ENCODE measurements at regions of chr14 and their contacts with region 1.

Region 1: DNA sequence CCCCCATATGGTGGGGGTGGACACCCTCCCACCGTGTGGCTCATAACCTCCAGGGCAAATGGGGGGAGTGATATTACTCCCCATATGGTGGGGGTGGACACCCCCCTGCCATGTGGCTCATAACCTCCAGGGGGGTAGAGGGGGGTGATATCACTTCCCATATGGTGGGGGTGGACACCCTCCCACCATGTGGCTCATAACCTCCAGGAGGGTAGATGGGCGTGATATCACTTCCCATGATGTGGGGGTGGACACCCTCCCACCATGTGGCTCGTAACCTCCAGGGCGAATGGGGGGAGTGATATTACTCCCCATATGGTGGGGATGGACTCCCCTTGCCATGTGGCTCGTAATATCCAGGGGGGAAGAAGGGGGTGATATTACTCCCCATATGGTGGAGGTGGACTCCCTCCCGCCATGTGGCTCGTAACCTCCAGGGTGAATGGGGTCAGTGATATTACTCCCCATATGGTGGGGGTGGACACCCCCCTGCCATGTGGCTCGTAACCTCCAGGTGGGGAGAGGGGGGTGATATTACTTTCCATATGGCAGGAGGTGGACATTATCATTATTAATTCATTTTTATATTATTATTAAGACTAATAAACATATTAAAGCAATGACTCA is 51.2 kb upstream of the OXA1L start:
- DNase-seq: no peak
- H3K4me3 ChIP-seq: no peak overlapping the region
- H3K27ac ChIP-seq: no peak overlapping the region
- H3K4me1 ChIP-seq: no peaks in the 10 kb centered on the region
- H3K27me3 ChIP-seq: no peaks in the 10 kb centered on the region
- CTCF ChIP-seq: no peak

Region 2: DNA sequence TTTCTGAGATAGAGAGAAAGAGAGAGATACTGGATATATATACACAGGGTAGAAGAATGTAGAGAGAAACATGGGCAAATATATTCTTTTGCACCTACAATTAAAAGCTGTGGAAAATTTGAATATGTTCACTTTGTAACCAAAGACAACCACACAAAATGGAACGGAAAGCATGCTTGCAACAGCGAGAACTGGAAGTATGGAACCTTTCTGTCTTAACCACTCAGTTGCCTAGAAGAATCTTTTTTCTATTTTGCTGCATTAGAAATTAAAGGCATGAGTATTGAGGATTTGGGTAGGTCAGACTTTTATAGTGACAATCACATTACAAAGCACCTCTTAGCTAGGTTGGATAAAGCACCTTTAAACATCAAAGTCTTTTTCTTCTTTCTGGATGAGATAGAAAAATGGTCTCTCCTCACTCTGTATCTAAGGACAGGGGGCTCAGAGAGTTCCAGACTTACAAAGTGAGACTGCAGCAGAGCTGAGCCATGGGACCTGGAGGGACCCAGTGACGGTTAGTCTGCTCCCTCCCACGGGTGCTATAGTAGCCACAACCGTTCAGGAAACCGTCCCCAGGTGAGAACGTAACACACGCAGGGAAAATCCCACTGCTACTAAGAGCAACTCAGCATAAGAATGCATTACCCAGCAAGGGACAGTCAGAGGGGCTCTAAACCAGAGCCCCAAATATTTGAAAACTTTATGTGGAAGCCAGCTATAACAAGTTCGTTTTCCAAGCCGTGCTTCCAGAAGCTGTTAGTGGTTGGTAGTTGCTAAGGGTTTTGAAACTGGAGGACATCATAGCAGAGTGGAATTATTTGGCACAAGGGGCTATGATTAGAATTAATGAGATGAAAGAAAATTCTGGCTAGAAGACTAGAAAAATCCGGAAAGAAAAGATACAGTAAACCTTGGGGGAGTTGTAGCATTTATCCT is 223.3 kb before region 1 on chr14:
- CTCF ChIA-PET with region 1: no interaction called
- POLR2A ChIA-PET with region 1: no interaction called
- intact Hi-C with region 1: no loop called
- DNase-seq: no peak
- H3K4me3 ChIP-seq: no peak overlapping the region
- H3K27ac ChIP-seq: no peak overlapping the region
- H3K4me1 ChIP-seq: no peaks in the 10 kb centered on the region
- H3K27me3 ChIP-seq: no peaks in the 10 kb centered on the region
- CTCF ChIP-seq: no peak

Region 3: GRCh38 chr14:22658946-22659345 is 56.4 kb before region 1 on chr14:
- CTCF ChIA-PET with region 1: interaction called, 3 read pairs
- POLR2A ChIA-PET with region 1: interaction called, 25 read pairs
- intact Hi-C with region 1: loop called (anchors 10 kb)
- DNase-seq: no peak
- H3K4me3 ChIP-seq: no peak overlapping the region
- H3K27ac ChIP-seq: no peak overlapping the region
- H3K4me1 ChIP-seq: no peaks in the 10 kb centered on the region
- H3K27me3 ChIP-seq: no peaks in the 10 kb centered on the region
- CTCF ChIP-seq: no peak

Region 4: DNA sequence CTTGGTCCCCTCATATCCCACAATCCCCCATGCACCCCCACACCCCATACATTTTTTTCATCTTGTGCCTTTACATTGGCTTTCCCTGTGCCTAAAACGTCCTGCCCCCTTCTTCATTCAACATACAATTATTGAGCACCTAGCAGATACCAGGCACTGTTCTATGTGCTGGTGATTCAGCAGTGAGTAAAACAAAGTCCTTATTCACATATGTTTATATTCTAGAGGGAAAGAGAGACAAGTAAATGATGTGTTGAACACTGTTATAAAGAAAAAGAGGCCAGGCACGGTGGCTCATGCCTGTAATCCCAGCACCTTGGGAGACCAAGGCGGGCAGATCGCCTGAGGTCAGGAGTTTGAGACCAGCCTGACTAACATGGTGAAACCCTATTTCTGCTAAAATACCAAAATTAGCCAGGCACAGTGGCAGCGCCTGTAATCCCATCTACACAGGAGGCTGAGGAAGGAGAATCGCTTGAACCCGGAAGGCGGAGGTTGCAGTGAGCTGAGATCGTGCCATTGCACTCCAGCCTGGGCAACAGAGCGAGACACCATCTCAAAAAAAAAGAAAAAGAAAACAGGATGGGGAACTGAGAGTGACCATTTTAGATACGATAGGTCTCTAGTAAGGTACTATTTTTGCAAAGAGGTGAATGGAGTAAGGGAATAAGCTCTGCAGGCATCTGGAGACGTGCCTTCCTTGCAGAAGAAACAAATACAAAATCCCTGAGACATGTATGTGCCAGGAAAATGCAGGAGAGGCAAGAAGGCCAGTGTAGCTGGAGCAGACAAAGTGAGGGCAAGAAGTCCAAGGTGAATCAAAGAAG is 87.8 kb after region 1 on chr14:
- CTCF ChIA-PET with region 1: no interaction called
- POLR2A ChIA-PET with region 1: interaction called, 16 read pairs
- intact Hi-C with region 1: no loop called
- DNase-seq: no peak
- H3K4me3 ChIP-seq: no peak overlapping the region
- H3K27ac ChIP-seq: no peak overlapping the region
- H3K4me1 ChIP-seq: peaks cover 12% of the 10 kb centered on the region
- H3K27me3 ChIP-seq: no peaks in the 10 kb centered on the region
- CTCF ChIP-seq: no peak

Region 5: GRCh38 chr14:22829661-22830442 is 114.6 kb after region 1 on chr14 and contains the start of gene MRPL52:
- CTCF ChIA-PET with region 1: no interaction called
- POLR2A ChIA-PET with region 1: no interaction called
- intact Hi-C with region 1: no loop called
- DNase-seq: peak; percentile 60 to 68
- H3K4me3 ChIP-seq: peak within 1 kb of the TSS; percentile 75
- H3K27ac ChIP-seq: peak within 1 kb of the TSS; percentile 65
- H3K4me1 ChIP-seq: peaks cover 7% of the 10 kb centered on the region
- H3K27me3 ChIP-seq: no peaks in the 10 kb centered on the region
- CTCF ChIP-seq: no peak
- total RNA-seq, gene MRPL52: 76.7 and 84.8 TPM in 2 replicates

Region 6: DNA sequence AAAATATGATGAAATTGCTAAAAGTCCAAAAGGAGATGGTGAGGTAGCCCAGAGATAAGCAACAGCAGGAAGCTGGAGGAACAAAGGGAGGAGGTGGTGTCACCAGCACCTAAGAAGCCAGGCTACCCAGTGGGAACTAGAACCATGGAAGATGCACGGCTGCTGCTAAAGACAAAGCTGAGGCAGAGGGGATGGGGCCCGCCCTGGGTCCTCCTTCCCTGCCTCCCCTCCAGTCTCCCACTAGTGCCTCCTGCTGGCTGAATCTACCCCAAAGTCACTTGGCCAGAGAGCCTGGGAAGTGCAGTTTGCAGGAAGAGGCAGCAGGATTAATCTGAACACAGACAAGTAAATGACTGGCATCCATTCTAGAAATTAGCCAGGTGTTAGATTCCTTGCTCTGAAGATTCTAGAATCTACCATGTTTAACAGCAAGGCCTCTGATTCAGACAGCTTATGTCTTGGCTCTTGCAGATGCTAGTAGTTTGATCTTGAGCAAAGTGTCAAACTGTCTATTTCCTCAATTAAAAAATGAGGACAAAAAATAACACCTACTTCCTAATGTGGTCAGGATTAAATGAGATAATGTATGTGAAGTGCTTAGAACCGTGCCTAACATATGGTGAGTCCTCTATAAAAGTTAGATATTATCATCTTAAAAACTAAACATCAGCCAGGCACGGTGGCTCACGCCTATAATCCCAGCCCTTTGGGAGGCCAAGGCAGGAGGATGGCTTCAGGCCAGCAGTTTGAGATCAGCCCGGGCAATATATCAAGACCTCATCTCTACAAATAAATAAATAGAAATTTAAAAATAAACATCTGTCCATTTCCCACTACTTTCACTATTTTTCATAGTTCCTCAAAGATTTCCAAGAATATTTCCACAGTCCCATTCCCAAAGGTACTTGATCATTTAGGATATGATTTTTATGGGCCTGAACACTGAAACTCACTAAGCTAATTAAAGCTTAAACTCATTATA is 150.4 kb after region 1 on chr14:
- CTCF ChIA-PET with region 1: no interaction called
- POLR2A ChIA-PET with region 1: no interaction called
- intact Hi-C with region 1: no loop called
- DNase-seq: no peak
- H3K4me3 ChIP-seq: no peak overlapping the region
- H3K27ac ChIP-seq: no peak overlapping the region
- H3K4me1 ChIP-seq: peaks cover 13% of the 10 kb centered on the region
- H3K27me3 ChIP-seq: no peaks in the 10 kb centered on the region
- CTCF ChIP-seq: no peak